ENCODE measurements at regions of chr17 and their contacts with region 1.

Region 1: DNA sequence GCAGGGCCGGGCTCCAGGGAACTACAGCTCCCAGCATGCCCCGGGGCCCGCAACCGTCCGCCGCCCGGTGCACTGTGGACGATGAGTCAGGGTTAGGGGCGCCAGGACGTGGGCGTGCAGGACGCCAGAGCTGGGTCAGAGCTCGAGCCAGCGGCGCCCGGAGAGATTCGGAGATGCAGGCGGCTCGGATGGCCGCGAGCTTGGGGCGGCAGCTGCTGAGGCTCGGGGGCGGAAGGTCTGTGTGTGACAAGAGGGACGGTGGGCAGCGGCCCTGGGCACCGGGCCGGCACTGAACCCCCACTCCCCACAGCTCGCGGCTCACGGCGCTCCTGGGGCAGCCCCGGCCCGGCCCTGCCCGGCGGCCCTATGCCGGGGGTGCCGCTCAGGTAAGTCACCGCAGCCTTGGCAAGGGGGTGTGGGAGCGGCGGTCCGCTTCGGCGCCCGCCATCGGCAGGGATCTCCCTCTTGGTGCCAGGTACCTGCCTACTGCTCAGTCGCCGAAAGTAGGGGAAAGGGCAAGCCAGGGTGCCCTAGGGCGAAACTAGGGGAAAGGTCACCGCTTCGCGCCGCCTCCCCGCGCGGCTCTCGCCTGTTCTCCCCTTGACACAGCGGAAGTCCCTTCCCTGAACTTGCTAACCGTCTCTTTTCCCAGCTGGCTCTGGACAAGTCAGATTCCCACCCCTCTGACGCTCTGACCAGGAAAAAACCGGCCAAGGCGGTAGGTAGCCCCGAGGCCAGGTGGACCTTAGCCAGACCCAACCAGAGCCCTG is at the starts of genes ACADVL and DLG4:
- DNase-seq: peak in 8 of 9 experiments; percentile 67 to 86 (median 82)
- ATAC-seq: peak; percentile 54
- H3K4me3 ChIP-seq: peak within 1 kb of the TSS; percentile 74 to 97
- H3K4me3 Mint-ChIP-seq: peak within 1 kb of the TSS; percentile 91
- H3K27ac ChIP-seq: peak within 1 kb of the TSS; percentile 35 to 86
- H3K27ac Mint-ChIP-seq: peak within 1 kb of the TSS; percentile 94
- H3K4me1 ChIP-seq: peaks cover 52% of the 10 kb centered on the region
- H3K4me1 Mint-ChIP-seq: peaks cover 55% of the 10 kb centered on the region
- H3K27me3 ChIP-seq: no peaks in the 10 kb centered on the region
- H3K27me3 Mint-ChIP-seq: no peaks in the 10 kb centered on the region
- CTCF ChIP-seq: no peak
- total RNA-seq, gene ACADVL: 264 to 275 TPM
- total RNA-seq, gene DLG4: 5.8 to 8.1 TPM

Region 2: DNA sequence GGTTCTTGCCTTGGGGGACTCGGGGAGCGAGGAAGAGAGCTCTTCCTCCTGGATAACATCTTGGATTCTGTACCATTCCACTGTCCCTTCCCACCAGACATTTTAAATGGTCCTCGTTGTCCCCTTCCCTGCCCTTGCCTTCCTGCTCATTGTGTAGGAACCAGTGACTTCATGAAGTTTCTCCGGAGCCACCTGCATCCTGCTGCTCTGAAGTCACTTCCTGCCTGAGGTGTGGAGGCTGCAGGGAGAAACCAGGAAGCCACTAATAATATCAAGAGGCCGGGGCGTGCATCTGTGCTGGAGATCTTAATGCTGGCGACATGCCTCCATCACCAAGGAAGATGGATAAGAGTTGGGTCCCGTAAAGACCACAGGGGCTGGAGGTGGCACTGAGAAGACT is 190.3 kb before region 1 on chr17:
- CTCF ChIA-PET with region 1: no interaction called
- POLR2A ChIA-PET with region 1: no interaction called
- intact Hi-C with region 1: no loop called
- DNase-seq: peak in 3 of 9 experiments; percentile 33 to 66 (median 48)
- ATAC-seq: peak; percentile 73
- H3K4me3 ChIP-seq: no peak overlapping the region
- H3K4me3 Mint-ChIP-seq: peak overlapping the region; percentile 74
- H3K27ac ChIP-seq: peak overlapping the region in 1 of 2 experiments; percentile 8
- H3K27ac Mint-ChIP-seq: peak overlapping the region; percentile 73
- H3K4me1 ChIP-seq: peaks cover 47% of the 10 kb centered on the region
- H3K4me1 Mint-ChIP-seq: peaks cover 36% of the 10 kb centered on the region
- H3K27me3 ChIP-seq: no peaks in the 10 kb centered on the region
- H3K27me3 Mint-ChIP-seq: no peaks in the 10 kb centered on the region
- CTCF ChIP-seq: no peak

Region 3: GRCh38 chr17:7204828-7205461 is 15.1 kb before region 1 on chr17:
- CTCF ChIA-PET with region 1: interaction called, 6 read pairs
- POLR2A ChIA-PET with region 1: interaction called, 5 read pairs
- intact Hi-C with region 1: loop called in 1 of 2 experiments (anchors 2 kb)
- DNase-seq: peak; percentile 87 to 100 (median 96)
- ATAC-seq: peak; percentile 84
- H3K4me3 ChIP-seq: peak overlapping the region; percentile 55 to 73
- H3K4me3 Mint-ChIP-seq: peak overlapping the region; percentile 87
- H3K27ac ChIP-seq: peak overlapping the region; percentile 90
- H3K27ac Mint-ChIP-seq: peak overlapping the region; percentile 91
- H3K4me1 ChIP-seq: peaks cover 20% of the 10 kb centered on the region
- H3K4me1 Mint-ChIP-seq: peaks cover 29% of the 10 kb centered on the region
- H3K27me3 ChIP-seq: no peaks in the 10 kb centered on the region
- H3K27me3 Mint-ChIP-seq: no peaks in the 10 kb centered on the region
- CTCF ChIP-seq: no peak